Posterior cingulate gyrus (tissue), 11 donors: ENCODE measurements at regions of chr12 and their contacts with region 1.

Region 1: GRCh38 chr12:96399919-96400797 is at the start of gene CDK17:
- DNase-seq: peak; percentile 72 to 96 (median 82)

Region 2: GRCh38 chr12:95908573-95908972 is 491.6 kb before region 1 on chr12:
- intact Hi-C with region 1: no loop called
- DNase-seq: no peak

Region 3: DNA sequence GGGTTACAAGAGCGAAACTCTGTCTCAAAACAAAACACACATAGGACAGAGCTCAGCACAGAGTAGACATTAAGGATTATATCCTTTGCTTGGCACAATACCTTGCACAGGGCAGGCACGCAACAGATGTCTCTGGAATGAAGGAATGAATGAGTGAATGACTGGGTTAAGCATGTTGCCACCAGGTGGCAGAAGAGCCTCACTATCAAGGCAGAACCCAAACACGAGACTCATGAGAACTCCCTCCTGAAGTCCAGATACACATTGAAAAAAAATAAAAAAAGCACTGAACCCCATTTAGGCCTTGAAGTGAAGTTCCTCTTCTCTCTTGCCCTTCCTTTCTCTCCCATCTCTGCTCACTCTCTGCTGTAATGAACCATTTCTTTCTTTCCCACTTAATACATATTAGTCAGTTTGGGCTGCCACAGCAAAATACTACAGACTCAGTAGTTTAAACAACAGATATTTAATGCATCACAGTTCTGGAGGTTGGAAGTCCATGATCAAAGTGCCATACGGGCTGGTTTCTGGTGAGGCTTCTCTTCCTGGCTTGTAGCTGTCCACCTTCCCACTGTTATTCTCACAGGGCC is 338.2 kb before region 1 on chr12:
- intact Hi-C with region 1: loop called (anchors 10 kb)
- DNase-seq: peak in 8 of 10 donors; percentile 23 to 92 (median 65)

Region 4: GRCh38 chr12:96164951-96165811 is 235.0 kb before region 1 on chr12:
- intact Hi-C with region 1: no loop called
- DNase-seq: no peak

Region 5: DNA sequence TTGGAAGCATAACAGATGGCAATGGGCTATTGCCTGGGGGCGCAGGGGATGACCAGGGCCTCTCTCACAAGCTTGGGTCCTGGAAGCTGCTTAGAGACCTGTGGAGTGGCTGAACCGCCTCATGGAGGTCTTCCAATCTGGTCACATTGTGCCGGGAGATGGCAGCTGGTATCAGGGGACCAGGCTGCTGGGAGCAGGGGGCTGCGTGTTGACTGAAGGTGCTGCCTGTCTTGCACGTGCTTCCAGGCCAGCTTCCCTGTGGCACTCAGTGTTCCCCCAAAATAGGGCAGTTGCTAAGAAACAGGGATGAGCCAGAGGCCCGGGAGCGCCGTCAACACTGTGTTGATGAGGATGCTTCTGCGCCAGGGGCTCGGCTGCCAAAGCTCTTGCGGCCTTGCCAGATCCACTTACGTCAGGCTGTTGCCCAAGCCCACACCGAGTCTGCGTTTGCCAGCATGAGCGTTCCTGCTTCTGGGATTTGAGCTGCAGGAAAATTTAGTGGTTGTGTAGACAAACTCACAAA is 166.2 kb before region 1 on chr12:
- intact Hi-C with region 1: loop called (anchors 2 kb)
- DNase-seq: peak; percentile 88 to 99 (median 94)

Region 6: GRCh38 chr12:96489103-96490056 is 89.2 kb after region 1 on chr12 and contains the start of gene CFAP54:
- intact Hi-C with region 1: loop called (anchors 10 kb)
- DNase-seq: peak; percentile 86 to 99 (median 94)